ENCODE measurements at regions of chr5 and their contacts with region 1.

Region 1: GRCh38 chr5:53262348-53262970 is 152.9 kb upstream of the MOCS2 start:
- DNase-seq: peak in 1 of 2 experiments; percentile 13
- H3K4me3 ChIP-seq: no peak overlapping the region
- H3K4me3 Mint-ChIP-seq: no peak overlapping the region
- H3K27ac Mint-ChIP-seq: no peak overlapping the region
- H3K4me1 ChIP-seq: no peaks in the 10 kb centered on the region
- H3K4me1 Mint-ChIP-seq: no peaks in the 10 kb centered on the region
- H3K27me3 ChIP-seq: no peaks in the 10 kb centered on the region
- H3K27me3 Mint-ChIP-seq: peaks cover 3% of the 10 kb centered on the region
- CTCF ChIP-seq: peak; percentile 43 to 55

Region 2: DNA sequence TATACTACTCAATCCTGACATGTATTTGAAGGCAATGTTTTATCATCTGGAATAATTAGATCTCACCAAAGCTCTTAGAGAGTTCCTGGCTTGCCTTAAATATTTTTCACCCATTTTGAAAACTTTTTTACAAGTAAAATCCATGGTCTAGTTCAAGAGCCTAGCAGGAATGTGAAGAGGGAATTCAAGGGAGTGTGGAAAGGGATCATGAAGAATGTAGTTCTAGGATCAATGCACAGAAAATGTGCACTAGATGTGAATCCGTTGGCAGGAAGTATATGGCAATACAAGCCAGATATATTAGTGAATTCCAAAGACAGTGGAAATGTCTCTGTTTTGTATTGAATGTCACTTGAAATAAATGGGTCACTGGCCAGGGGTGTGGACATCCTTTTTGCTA is 15.0 kb after region 1 on chr5:
- CTCF ChIA-PET with region 1: no interaction called
- POLR2A ChIA-PET with region 1: no interaction called
- intact Hi-C with region 1: no loop called
- DNase-seq: no peak
- H3K4me3 ChIP-seq: no peak overlapping the region
- H3K4me3 Mint-ChIP-seq: no peak overlapping the region
- H3K27ac Mint-ChIP-seq: no peak overlapping the region
- H3K4me1 ChIP-seq: no peaks in the 10 kb centered on the region
- H3K4me1 Mint-ChIP-seq: no peaks in the 10 kb centered on the region
- H3K27me3 ChIP-seq: no peaks in the 10 kb centered on the region
- H3K27me3 Mint-ChIP-seq: no peaks in the 10 kb centered on the region
- CTCF ChIP-seq: no peak

Region 3: DNA sequence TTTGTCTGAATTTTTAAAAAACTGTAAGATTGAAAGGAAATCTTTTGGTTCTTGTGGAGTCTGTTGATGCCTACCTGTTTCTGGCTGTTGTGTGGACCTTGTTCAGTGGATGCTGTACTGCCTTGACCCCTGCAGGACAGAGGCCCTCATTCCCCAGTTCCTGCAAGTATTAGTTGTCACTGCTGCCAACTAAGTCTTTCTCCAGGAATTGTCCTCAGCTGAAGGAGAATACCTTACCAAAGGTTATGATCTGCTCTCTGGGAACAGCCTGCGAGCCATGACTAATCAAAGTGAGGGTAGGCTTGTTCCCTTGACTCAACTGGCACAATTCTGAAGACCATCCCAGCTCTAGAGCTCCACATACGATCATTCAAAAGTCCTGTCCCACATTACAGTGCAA is 72.7 kb after region 1 on chr5:
- CTCF ChIA-PET with region 1: no interaction called
- POLR2A ChIA-PET with region 1: no interaction called
- intact Hi-C with region 1: loop called (anchors 1 kb)
- DNase-seq: peak; percentile 39 to 48
- H3K4me3 ChIP-seq: no peak overlapping the region
- H3K4me3 Mint-ChIP-seq: no peak overlapping the region
- H3K27ac Mint-ChIP-seq: no peak overlapping the region
- H3K4me1 ChIP-seq: no peaks in the 10 kb centered on the region
- H3K4me1 Mint-ChIP-seq: no peaks in the 10 kb centered on the region
- H3K27me3 ChIP-seq: no peaks in the 10 kb centered on the region
- H3K27me3 Mint-ChIP-seq: peaks cover 3% of the 10 kb centered on the region
- CTCF ChIP-seq: peak; percentile 41 to 70

Region 4: GRCh38 chr5:53425598-53426511 is 163.4 kb after region 1 on chr5:
- CTCF ChIA-PET with region 1: no interaction called
- POLR2A ChIA-PET with region 1: no interaction called
- intact Hi-C with region 1: loop called (anchors 1 kb)
- DNase-seq: peak; percentile 47 to 54
- H3K4me3 ChIP-seq: no peak overlapping the region
- H3K4me3 Mint-ChIP-seq: no peak overlapping the region
- H3K27ac Mint-ChIP-seq: no peak overlapping the region
- H3K4me1 ChIP-seq: peaks cover 8% of the 10 kb centered on the region; the same call in 1 of the 2 replicates
- H3K4me1 Mint-ChIP-seq: peaks cover 23% of the 10 kb centered on the region
- H3K27me3 ChIP-seq: no peaks in the 10 kb centered on the region
- H3K27me3 Mint-ChIP-seq: peaks cover 12% of the 10 kb centered on the region
- CTCF ChIP-seq: peak; percentile 29 to 45

Region 5: DNA sequence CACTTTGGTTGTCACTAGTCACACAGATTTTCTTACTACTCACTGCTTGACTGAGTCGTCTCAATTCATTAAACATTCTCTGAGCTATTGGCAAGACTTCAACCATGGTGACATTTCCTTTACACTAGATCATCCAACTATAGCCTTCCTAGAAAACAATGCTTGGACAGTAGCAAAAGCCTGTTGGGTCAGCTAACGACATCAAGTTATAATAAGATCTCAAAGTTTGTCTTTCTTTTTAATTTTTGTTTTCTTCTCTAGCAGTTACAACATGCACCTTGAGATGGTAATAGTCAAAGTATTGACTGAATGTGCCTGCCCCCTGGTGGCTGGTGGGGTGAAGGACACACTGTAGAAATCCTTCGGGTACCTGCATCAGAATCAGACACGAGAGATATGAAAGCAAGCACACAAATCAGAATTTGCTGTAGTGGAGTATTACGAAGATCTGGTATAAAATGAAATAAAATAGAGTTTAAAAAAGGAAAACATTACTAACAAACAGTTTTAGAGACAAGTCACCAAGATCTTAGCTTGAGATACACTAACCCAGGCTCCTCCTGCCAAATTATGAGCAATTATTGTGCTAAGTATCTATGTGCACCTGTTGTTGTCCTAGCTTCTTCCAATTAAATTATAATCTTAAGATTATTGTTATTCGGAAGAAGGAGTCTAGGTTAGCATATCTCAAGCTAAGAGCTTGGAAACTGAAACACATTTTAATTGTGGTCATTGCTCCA is 966.8 kb after region 1 on chr5:
- CTCF ChIA-PET with region 1: no interaction called
- POLR2A ChIA-PET with region 1: no interaction called
- intact Hi-C with region 1: loop called (anchors 2 kb)
- DNase-seq: peak; percentile 57 to 76
- H3K4me3 ChIP-seq: no peak overlapping the region
- H3K4me3 Mint-ChIP-seq: no peak overlapping the region
- H3K27ac Mint-ChIP-seq: no peak overlapping the region
- H3K4me1 ChIP-seq: no peaks in the 10 kb centered on the region
- H3K4me1 Mint-ChIP-seq: peaks cover 6% of the 10 kb centered on the region
- H3K27me3 ChIP-seq: no peaks in the 10 kb centered on the region
- H3K27me3 Mint-ChIP-seq: no peaks in the 10 kb centered on the region
- CTCF ChIP-seq: peak; percentile 89 to 93

Measured in Caco-2 (cell line).